ENCODE measurements at regions of chr7 and their contacts with region 1.

Region 1: DNA sequence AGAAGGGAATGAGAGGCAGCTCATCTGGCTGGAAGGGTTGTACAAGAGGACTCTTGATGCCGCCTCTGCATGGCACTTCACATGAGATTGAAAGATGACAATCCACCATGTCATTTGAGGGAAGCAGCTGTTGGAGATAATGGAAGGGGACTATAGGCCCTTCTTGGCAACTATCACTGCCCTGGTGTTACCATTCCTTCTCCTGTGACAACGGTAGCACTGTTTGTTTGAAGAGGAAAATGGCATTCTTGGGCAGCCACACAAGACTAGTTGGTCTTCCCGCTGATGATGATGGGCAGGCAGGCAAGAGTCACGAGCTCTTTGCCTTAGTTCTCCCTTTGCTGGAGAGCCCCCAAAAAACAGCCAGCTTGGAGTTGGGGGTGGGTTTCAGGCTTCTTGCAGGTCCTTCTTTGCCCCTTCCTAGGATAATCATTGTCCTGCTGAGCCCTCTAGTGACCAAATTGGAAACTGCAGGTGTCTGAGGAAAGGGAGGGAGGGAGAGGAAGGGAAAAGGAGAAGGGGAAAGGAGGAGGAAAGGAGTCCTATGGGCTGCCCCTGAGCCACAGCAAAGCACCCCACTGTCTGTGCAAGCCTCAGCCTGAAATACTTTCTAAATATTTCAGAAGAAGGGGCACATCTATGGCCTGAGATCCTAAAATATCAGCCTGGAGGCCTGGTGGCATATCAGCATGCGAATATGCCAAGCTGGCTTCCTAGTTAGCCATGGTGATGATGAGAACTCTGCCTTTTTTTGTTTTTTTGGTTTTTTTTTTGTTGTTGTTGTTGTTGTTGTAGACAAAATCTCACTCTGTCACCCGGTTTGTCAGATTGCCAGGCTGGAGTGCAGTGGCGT is 165.6 kb upstream of the KMT2E start:
- DNase-seq: peak in 39 of 42 donors; percentile 43 to 94 (median 78)

Region 2: GRCh38 chr7:104627516-104627915 is 220.8 kb before region 1 on chr7:
- intact Hi-C with region 1: no loop called
- DNase-seq: peak in 22 of 42 donors; percentile 5 to 60 (median 26)

Region 3: GRCh38 chr7:104767826-104768536 is 80.4 kb before region 1 on chr7:
- intact Hi-C with region 1: loop called (anchors 5 kb)
- DNase-seq: peak in 26 of 42 donors; percentile 3 to 71 (median 32)

Region 4: GRCh38 chr7:104784686-104785085 is 63.7 kb before region 1 on chr7:
- intact Hi-C with region 1: no loop called
- DNase-seq: no peak

Region 5: DNA sequence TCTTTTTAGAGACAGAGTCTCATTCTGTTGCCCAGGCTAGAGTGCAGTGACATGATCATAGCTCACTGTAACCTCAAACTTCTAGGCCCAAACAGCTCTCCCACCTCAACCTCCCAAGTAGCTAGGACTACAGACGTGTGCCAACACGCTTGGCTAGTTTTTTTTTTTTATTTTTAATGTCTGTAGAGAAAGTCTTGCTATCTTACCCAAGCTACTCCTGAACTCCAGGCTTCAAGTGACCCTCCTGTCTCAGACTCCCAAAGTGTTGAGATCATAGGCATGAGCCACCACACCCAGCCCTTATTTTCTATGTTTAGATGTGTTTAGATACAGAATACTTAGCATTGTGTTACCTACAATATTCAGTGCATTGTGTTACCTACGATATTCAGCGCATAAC is 212.1 kb after region 1 on chr7:
- intact Hi-C with region 1: no loop called
- DNase-seq: no peak

Measured in head of caudate nucleus (tissue), 42 donors.